ENCODE measurements at regions of chr3 and their contacts with region 1.

Region 1: GRCh38 chr3:66038726-66039589 is at the start of gene MAGI1:
- DNase-seq: peak; percentile 97
- H3K4me3 ChIP-seq: peak within 1 kb of the TSS; percentile 65 to 91 (median 91)
- H3K27ac ChIP-seq: peak within 1 kb of the TSS; percentile 84
- H3K4me1 ChIP-seq: peaks cover 24% of the 10 kb centered on the region
- H3K27me3 ChIP-seq: no peaks in the 10 kb centered on the region
- CTCF ChIP-seq: no peak
- POLR2A ChIP-seq: peak; percentile 21
- total RNA-seq, gene MAGI1: 47.7 and 47.9 TPM in 2 replicates

Region 2: GRCh38 chr3:65356331-65357286 is 682.3 kb before region 1 on chr3:
- CTCF ChIA-PET with region 1: no interaction called
- POLR2A ChIA-PET with region 1: no interaction called
- dilution Hi-C with region 1: no loop called
- intact Hi-C with region 1: no loop called
- DNase-seq: no peak
- H3K4me3 ChIP-seq: no peak overlapping the region
- H3K27ac ChIP-seq: no peak overlapping the region
- H3K4me1 ChIP-seq: peaks cover 12% of the 10 kb centered on the region
- H3K27me3 ChIP-seq: no peaks in the 10 kb centered on the region
- CTCF ChIP-seq: no peak
- POLR2A ChIP-seq: no peak

Region 3: DNA sequence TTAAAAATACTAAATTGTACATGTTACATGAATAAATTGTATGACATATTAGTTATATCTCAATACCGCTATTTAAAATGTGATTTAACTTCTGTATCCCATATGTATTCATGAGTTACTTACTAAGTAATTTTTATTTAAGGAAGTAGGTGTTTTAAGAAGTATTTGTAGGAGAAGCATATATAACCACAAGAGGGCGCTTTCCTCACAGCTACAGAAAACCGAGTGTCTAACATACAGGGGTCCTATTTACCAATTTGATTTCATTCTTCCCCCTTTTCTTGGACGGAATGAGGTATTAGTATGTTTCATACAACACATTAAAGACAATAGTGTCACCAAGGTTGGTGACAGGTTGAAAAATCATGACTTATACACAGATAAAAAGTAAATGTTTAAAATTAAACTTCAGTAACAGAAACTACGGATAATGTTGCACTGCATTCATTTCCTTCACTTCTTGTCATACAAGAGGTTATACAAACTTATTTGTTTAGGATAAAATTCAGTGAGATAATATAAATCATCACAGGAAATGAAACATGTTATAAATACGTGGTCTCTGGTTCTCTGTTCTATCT is 253.8 kb before region 1 on chr3:
- CTCF ChIA-PET with region 1: interaction called, 5 read pairs
- POLR2A ChIA-PET with region 1: no interaction called
- dilution Hi-C with region 1: no loop called
- intact Hi-C with region 1: loop called (anchors 2 kb)
- DNase-seq: peak; percentile 73
- H3K4me3 ChIP-seq: no peak overlapping the region
- H3K27ac ChIP-seq: no peak overlapping the region
- H3K4me1 ChIP-seq: no peaks in the 10 kb centered on the region
- H3K27me3 ChIP-seq: no peaks in the 10 kb centered on the region
- CTCF ChIP-seq: peak; percentile 25 to 41
- POLR2A ChIP-seq: no peak

Region 4: GRCh38 chr3:65914740-65915367 is 124.1 kb before region 1 on chr3:
- CTCF ChIA-PET with region 1: interaction called, 3 read pairs
- POLR2A ChIA-PET with region 1: no interaction called
- dilution Hi-C with region 1: no loop called
- intact Hi-C with region 1: loop called (anchors 2 kb)
- DNase-seq: peak; percentile 17
- H3K4me3 ChIP-seq: no peak overlapping the region
- H3K27ac ChIP-seq: peak overlapping the region; percentile 45
- H3K4me1 ChIP-seq: peaks cover 13% of the 10 kb centered on the region
- H3K27me3 ChIP-seq: no peaks in the 10 kb centered on the region
- CTCF ChIP-seq: no peak
- POLR2A ChIP-seq: no peak

Region 5: GRCh38 chr3:65963787-65964677 is 74.9 kb before region 1 on chr3:
- CTCF ChIA-PET with region 1: interaction called, 3 read pairs
- POLR2A ChIA-PET with region 1: interaction called, 12 read pairs
- dilution Hi-C with region 1: no loop called
- intact Hi-C with region 1: loop called (anchors 1 kb)
- DNase-seq: peak; percentile 94
- H3K4me3 ChIP-seq: peak overlapping the region in 1 of 3 experiments; percentile 38
- H3K27ac ChIP-seq: peak overlapping the region; percentile 95
- H3K4me1 ChIP-seq: peaks cover 46% of the 10 kb centered on the region
- H3K27me3 ChIP-seq: no peaks in the 10 kb centered on the region
- CTCF ChIP-seq: no peak
- POLR2A ChIP-seq: peak; percentile 45

Region 6: DNA sequence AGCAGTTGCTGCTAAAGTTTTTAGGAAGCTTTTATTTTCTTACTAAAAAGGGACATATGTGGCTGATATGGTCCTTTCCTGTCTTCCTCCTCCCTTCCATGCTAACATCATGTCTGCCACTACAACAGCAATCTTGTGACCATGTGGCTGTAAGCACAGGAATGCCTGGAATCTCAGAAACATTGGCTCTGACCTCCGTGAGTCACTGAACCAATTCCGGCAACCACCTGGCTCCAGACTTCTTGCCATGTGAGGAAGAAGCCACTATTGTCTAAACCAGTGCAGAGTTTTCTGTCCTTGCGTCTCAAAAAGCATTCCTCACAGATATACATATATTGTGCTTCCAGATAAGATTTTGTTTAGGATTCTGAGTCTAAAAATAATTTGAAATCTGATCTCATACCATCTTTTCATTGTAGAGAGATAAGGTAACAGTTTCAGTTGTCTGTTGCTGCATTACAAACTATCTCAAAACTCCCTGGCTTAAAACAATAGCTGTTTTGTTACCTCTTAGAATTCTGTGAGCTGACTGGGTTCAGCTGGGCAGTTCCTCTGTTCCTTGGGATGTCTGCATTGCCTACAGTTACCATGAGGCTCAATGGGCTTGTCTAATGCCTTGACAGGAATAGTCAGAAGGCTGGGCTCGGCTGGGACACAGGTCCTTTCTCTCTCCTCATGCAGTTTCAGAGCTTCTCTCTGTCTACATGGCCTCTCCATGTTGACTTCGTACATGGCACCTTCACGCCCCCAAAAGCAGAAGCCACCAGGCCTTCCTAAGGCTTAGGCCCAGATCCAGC is 77.1 kb after region 1 on chr3:
- CTCF ChIA-PET with region 1: no interaction called
- POLR2A ChIA-PET with region 1: interaction called, 3 read pairs
- dilution Hi-C with region 1: no loop called
- intact Hi-C with region 1: loop called (anchors 2 kb)
- DNase-seq: peak; percentile 94
- H3K4me3 ChIP-seq: no peak overlapping the region
- H3K27ac ChIP-seq: peak overlapping the region; percentile 97
- H3K4me1 ChIP-seq: peaks cover 20% of the 10 kb centered on the region
- H3K27me3 ChIP-seq: no peaks in the 10 kb centered on the region
- CTCF ChIP-seq: no peak
- POLR2A ChIP-seq: no peak

Region 7: DNA sequence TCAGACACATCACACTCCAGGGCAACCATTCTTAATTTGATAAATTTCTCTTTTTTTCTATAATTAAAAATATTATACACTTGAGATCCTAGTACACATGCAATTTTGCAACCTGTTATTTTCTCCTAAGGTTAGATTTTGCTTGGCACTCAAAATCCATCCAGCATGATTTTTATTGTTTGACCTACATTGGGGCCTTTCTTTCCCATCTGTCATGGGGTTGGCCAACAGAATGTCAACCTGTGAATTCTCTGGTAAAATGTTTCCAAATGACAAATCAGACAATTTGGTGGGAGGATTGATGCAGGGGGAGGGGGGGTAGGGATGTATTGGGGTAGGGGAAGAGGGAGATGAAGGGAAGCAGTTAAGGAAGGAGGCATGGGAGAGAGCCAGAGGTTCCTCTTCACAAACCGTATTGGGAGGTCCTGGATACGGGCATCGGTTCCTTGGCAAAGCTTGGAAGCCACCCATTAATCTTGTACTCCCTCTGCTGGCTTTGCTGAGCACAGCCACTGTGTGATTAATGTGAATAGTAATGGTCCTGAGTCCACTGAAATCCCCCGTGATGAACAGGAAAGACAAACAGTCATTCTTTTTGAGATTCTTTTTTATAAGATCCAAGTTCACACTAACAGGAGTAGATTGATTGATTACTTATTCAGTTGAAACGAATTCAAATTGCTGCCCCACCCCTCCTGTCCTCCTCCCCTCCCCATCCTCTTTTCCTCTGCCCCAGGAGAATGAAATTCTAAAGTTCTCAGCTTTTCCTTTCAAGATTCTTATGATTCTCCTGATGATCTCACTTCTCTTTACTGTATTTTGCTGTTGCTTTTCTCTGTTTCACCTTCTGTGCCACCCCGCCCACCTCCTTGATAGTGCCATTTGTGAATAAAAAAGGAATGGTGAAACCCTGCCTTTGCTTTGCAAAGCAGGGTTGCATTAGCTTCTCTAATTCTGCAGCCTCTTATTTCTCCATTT is 99.7 kb after region 1 on chr3:
- CTCF ChIA-PET with region 1: interaction called, 24 read pairs
- POLR2A ChIA-PET with region 1: no interaction called
- dilution Hi-C with region 1: no loop called
- intact Hi-C with region 1: loop called (anchors 1 kb)
- DNase-seq: peak; percentile 72
- H3K4me3 ChIP-seq: no peak overlapping the region
- H3K27ac ChIP-seq: no peak overlapping the region
- H3K4me1 ChIP-seq: peaks cover 10% of the 10 kb centered on the region
- H3K27me3 ChIP-seq: peaks cover 3 to 4% of the 10 kb centered on the region in 2 experiments
- CTCF ChIP-seq: peak; percentile 75 to 81
- POLR2A ChIP-seq: no peak